Activated T-helper 1 cell treated with anti-CD3 and anti-CD28 coated beads, Interleukin-12 subunit alpha, Interleukin-12 subunit beta, Interleukin-2, Interleukin-4 antibody, amounts not matched to agents 30 ng/mL and 10 ng/mL and 1 ng/mL, durations not matched to agents 14 hours and 24 hours and 36 hours (primary cell): ENCODE measurements at regions of chr15 and their contacts with region 1.

Region 1: GRCh38 chr15:99644913-99645542 is 79.2 kb downstream of the MEF2A start:
- DNase-seq: no peak
- H3K4me3 Mint-ChIP-seq: no peak overlapping the region
- H3K27ac Mint-ChIP-seq: no peak overlapping the region
- H3K4me1 Mint-ChIP-seq: peaks cover 7% of the 10 kb centered on the region
- H3K27me3 Mint-ChIP-seq: no peaks in the 10 kb centered on the region

Region 2: DNA sequence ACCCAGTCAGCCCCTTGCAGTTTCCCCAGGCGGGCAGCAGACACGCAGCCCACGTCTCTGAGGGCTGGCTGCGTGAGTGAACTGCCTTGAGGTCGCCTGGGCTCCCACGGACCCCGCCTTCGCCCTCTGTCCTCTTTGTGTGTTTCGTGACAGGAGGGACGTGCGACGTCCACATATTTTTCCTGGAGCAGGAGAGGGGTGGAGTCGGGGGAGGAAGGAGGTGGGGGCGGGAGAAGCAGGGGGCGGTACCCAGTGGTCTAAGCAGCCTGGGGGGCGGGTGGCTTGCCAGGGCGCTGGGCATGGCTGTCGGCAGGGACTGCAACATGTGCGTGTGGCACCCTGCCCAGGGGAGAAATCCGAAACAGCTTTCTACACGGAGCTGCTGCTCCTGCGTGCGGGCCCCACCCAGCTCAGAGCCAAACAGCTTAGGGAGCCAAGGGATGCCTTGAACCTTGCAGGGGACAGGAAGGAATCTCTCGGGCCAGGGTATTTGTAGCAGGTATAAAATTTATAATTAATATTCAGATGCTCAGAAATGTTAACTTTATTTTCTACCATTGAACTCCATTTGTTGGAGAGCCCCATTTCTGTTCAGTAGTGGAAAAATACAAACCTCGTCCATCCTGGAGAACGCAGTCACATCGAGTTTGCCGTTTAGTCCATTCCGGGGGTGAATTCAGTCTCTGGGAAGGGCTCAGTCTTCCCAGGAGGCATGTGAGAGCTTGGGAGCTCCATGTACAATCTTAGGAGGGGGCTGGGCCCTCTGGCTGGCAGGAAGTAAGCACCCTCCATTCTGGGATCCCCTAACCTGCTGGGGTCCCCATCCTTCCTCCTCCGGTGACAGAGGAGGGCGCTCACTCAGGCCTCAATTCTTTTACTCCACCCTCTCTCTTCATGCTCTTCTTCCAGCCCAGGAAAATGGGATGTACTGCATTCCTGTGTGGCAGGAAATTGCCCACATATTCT is 158.4 kb before region 1 on chr15:
- intact Hi-C with region 1: no loop called
- DNase-seq: no peak
- H3K4me3 Mint-ChIP-seq: no peak overlapping the region
- H3K27ac Mint-ChIP-seq: no peak overlapping the region
- H3K4me1 Mint-ChIP-seq: peaks cover 21% of the 10 kb centered on the region
- H3K27me3 Mint-ChIP-seq: peaks cover 4% of the 10 kb centered on the region

Region 3: GRCh38 chr15:99582508-99582960 is 62.5 kb before region 1 on chr15:
- intact Hi-C with region 1: loop called (anchors 5 kb)
- DNase-seq: no peak
- H3K4me3 Mint-ChIP-seq: no peak overlapping the region
- H3K27ac Mint-ChIP-seq: no peak overlapping the region
- H3K4me1 Mint-ChIP-seq: peaks cover 5% of the 10 kb centered on the region
- H3K27me3 Mint-ChIP-seq: peaks cover 1% of the 10 kb centered on the region

Region 4: DNA sequence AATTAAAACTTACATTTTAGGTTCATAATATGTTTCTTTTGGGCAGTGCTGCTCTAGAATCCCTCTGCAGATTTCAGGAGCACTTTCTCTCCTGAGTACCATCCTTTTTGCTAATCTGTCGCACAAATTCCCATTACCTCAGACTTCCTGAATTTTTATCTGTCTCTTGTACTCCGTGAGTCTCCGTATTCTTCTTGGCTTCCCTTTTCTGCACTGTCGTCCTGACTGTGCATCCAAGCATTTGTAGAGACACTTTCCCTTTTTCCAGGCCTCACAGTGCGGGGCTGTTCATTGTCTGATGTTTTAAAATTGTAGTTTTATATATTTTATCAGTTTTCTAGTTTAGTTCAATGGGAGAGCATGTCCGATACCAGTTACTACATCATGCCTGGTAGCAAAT is 52.0 kb before region 1 on chr15:
- intact Hi-C with region 1: no loop called
- DNase-seq: no peak
- H3K4me3 Mint-ChIP-seq: no peak overlapping the region
- H3K27ac Mint-ChIP-seq: no peak overlapping the region
- H3K4me1 Mint-ChIP-seq: peaks cover 31% of the 10 kb centered on the region
- H3K27me3 Mint-ChIP-seq: no peaks in the 10 kb centered on the region

Region 5: DNA sequence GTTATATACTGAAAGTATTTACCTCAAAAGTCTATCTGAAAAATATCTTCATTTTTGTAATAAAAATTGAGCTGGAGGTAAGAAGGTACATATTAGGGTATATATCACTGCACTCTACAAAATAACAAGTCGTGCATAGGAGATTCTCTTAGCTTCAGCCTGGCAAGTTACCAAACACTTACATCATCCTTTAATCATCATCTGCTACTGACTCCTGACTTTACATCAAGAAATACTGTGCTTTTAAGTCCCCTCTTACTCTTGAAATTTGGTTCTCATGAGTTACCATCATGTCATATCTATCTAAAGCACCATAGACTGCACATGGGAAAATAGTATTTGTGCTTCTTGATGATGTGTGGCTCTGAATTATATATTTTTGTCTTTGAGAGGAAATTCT is 37.4 kb after region 1 on chr15:
- intact Hi-C with region 1: no loop called
- DNase-seq: no peak
- H3K4me3 Mint-ChIP-seq: no peak overlapping the region
- H3K27ac Mint-ChIP-seq: no peak overlapping the region
- H3K4me1 Mint-ChIP-seq: peaks cover 24% of the 10 kb centered on the region
- H3K27me3 Mint-ChIP-seq: no peaks in the 10 kb centered on the region